ENCODE measurements at regions of chr20 and their contacts with region 1.

Region 1: GRCh38 chr20:64038565-64039292 is 2.7 kb downstream of the C20orf204 start:
- DNase-seq: no peak
- H3K4me3 ChIP-seq: peak overlapping the region; percentile 45
- H3K27me3 ChIP-seq: peaks cover 21% of the 10 kb centered on the region
- CTCF ChIP-seq: peak; percentile 60

Region 2: GRCh38 chr20:63425846-63426485 is 612.8 kb before region 1 on chr20:
- CTCF ChIA-PET with region 1: no interaction called
- POLR2A ChIA-PET with region 1: no interaction called
- DNase-seq: no peak
- H3K4me3 ChIP-seq: no peak overlapping the region
- H3K27me3 ChIP-seq: no peaks in the 10 kb centered on the region; the same call in 1 of the 2 replicates
- CTCF ChIP-seq: no peak

Region 3: GRCh38 chr20:63908008-63908624 is 130.6 kb before region 1 on chr20:
- CTCF ChIA-PET with region 1: no interaction called
- POLR2A ChIA-PET with region 1: no interaction called
- DNase-seq: no peak
- H3K4me3 ChIP-seq: no peak overlapping the region
- H3K27me3 ChIP-seq: no peaks in the 10 kb centered on the region
- CTCF ChIP-seq: no peak

Region 4: DNA sequence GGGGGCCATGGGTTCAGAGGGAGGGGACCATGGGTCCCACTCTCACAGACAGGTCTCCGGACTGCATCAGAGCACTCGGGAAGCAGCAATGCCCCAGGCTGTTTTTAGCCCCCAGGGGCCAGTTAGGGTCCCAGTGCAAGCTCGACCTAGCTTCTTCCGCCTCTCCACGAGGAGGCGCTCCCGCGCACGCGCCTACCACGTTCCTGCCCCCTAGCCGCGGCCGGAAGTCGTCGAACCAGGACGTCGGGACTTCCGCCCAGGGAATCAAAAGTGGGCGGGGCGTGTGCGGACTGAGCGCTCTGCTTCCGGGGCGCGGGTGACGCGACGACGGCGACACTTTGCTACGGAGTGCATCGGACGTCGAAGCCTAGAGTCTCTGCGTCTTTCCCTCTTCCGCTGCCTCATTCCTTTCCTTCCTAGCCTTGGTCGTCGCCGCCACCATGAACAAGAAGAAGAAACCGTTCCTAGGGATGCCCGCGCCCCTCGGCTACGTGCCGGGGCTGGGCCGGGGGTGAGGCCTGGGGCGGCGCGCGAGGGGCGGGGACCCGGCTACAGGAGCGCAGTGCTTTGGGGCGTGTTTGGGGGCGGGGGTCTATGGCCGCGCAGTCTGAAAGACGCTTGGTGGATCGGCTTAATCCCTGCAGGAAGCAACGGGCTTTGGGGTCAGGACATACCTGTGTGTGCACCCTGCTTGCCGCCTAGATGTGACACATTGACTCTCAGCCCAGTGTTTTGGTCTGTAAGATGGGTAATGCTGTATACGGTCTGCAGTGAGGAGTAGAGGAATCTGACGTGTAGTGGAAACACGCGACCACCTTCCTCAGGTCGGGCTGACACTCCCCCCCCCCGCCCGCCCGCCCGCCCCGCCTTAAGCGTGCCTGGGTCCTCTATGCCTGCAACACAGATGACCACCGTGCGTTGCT is 57.7 kb before region 1 on chr20 and contains the start of gene PRPF6:
- CTCF ChIA-PET with region 1: interaction called, 16 read pairs
- POLR2A ChIA-PET with region 1: no interaction called
- DNase-seq: peak; percentile 60
- H3K4me3 ChIP-seq: peak within 1 kb of the TSS; percentile 97
- H3K27me3 ChIP-seq: no peaks in the 10 kb centered on the region
- CTCF ChIP-seq: peak; percentile 99
- polyA plus RNA-seq, gene PRPF6: 37.9 and 52.3 TPM in 2 replicates

Region 5: GRCh38 chr20:64027981-64028685 is 10.6 kb before region 1 on chr20:
- CTCF ChIA-PET with region 1: interaction called, 11 read pairs
- POLR2A ChIA-PET with region 1: no interaction called
- DNase-seq: no peak
- H3K4me3 ChIP-seq: no peak overlapping the region
- H3K27me3 ChIP-seq: no peaks in the 10 kb centered on the region
- CTCF ChIP-seq: no peak

Region 6: GRCh38 chr20:64062596-64063388 is 24.1 kb after region 1 on chr20 and contains the start of gene TCEA2:
- CTCF ChIA-PET with region 1: interaction called, 76 read pairs
- POLR2A ChIA-PET with region 1: no interaction called
- DNase-seq: peak; percentile 60
- H3K4me3 ChIP-seq: peak within 1 kb of the TSS; percentile 83
- H3K27me3 ChIP-seq: no peaks in the 10 kb centered on the region
- CTCF ChIP-seq: no peak
- polyA plus RNA-seq, gene TCEA2: 17.3 and 34.2 TPM in 2 replicates

Region 7: GRCh38 chr20:64069614-64070243 is 31.0 kb after region 1 on chr20:
- CTCF ChIA-PET with region 1: interaction called, 17 read pairs
- POLR2A ChIA-PET with region 1: no interaction called
- DNase-seq: no peak
- H3K4me3 ChIP-seq: no peak overlapping the region
- H3K27me3 ChIP-seq: no peaks in the 10 kb centered on the region
- CTCF ChIP-seq: peak; percentile 83

Region 8: DNA sequence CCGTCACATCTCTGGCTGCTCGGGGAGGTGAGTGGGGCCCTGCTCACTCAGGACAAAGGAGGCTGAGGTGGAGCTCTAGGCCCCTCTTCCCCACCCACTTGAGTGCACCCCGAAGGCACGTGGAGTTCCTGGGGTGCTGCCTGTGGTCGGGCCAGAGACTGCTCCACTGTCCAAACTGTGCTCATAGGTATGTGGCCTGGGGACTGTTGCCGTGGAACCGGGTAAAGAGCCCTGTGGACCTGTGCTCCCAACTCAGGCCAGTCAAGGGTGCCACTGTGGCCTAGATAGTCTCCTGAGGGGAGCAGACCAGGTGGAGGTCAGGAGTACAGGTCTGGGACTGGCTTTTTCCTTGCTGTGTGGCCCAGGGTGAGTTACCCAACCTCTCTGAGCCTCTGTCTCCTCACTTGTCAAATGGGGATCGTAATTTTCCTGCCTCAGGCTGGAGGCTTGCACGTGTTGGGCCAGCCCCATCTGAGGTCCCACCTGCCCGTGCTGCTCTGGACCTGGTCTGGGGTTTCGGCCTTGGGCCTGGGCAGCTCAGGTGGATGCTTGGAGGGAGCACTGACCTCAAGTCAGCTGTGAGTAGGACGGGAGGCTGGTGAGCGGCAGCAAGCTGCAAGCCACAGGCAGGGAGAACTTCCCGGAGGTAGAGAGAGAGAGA is 81.1 kb after region 1 on chr20:
- CTCF ChIA-PET with region 1: interaction called, 35 read pairs
- POLR2A ChIA-PET with region 1: no interaction called
- DNase-seq: no peak
- H3K4me3 ChIP-seq: no peak overlapping the region
- H3K27me3 ChIP-seq: peaks cover 4% of the 10 kb centered on the region; the same call in 1 of the 2 replicates
- CTCF ChIP-seq: no peak

Measured in BJ (cell line).